CD14-positive monocyte (primary cell): ENCODE measurements at regions of chr20 and their contacts with region 1.

Region 1: DNA sequence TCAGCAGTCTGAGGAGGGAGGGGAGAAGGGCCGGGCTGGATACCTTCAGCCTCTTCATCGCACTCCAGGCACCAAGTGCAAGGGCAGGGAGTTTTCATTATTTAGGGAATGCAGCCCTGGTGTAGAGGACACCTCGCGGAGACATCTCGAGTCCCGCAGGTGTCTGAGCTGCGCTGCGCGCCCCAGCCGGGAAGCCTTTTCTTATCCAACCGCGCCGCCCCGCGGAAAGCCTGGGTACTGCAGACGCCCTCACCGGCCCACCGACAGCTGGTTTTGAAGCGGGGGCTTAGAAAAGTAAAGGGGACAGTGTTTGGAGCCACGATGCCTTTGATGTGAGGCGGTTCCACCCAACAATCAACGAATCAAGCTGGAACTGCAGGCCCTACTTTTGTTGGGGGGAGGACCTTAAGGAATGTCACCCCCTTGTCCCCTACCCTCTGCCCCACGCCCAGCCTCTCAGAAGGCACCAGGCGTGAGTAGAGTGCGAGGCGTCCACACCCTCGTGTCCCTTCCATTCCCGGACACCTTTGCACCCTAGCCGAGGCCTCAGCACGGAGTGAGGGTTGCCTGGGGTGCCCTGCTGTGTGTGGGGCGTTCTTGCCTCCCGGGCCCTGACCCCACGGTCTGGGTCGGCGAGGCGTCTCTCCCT is 8.6 kb downstream of the NKX2-2 start:
- DNase-seq: peak; percentile 18 to 35 (median 35)
- H3K4me3 ChIP-seq: peak overlapping the region in 1 of 3 experiments; percentile 66
- H3K4me3 Mint-ChIP-seq: peak overlapping the region in 1 of 2 donors; percentile 71
- H3K27ac ChIP-seq: no peak overlapping the region
- H3K27ac Mint-ChIP-seq: no peak overlapping the region
- H3K4me1 ChIP-seq: peaks cover 19 to 21% of the 10 kb centered on the region in 2 donors
- H3K4me1 Mint-ChIP-seq: peaks cover 28% of the 10 kb centered on the region
- H3K27me3 ChIP-seq: peaks cover 46 to 65% of the 10 kb centered on the region in 2 donors
- H3K27me3 Mint-ChIP-seq: peaks cover 63 to 84% (median 74%) of the 10 kb centered on the region in 3 donors
- CTCF ChIP-seq: peak; percentile 98

Region 2: DNA sequence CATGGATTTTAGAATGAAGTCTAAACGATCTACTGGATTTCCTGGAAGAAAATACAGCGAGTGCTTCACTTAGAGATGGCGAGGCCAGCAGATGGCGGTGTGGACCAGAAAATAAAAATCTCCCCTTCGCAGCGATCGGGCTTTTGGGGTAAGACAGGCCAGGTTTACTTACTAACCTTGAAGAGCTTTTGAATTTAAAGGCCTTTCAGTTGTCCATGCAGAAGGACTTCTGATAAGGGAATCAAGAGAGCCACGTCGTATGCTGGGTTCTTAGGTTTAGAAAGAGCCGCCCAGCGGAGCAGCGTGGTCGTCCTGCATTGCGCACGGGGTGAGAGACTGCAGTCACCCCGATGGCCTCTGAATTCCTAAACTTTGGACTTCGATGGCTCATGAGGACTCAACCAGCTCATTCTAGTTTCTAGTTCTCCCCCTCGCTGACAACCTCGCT is 667.7 kb before region 1 on chr20:
- intact Hi-C with region 1: loop called in 1 of 2 experiments (anchors 5 kb)
- DNase-seq: peak in 2 of 3 donors; percentile 19 to 25
- H3K4me3 ChIP-seq: no peak overlapping the region
- H3K4me3 Mint-ChIP-seq: peak overlapping the region; percentile 60 to 77
- H3K27ac ChIP-seq: no peak overlapping the region
- H3K27ac Mint-ChIP-seq: no peak overlapping the region
- H3K4me1 ChIP-seq: peaks cover 0 to 5% of the 10 kb centered on the region in 2 donors
- H3K4me1 Mint-ChIP-seq: peaks cover 8% of the 10 kb centered on the region
- H3K27me3 ChIP-seq: peaks cover 0 to 9% of the 10 kb centered on the region in 2 donors
- H3K27me3 Mint-ChIP-seq: peaks cover 15 to 32% (median 25%) of the 10 kb centered on the region in 3 donors
- CTCF ChIP-seq: peak; percentile 77

Region 3: GRCh38 chr20:20860078-20860806 is 645.0 kb before region 1 on chr20:
- intact Hi-C with region 1: loop called in 1 of 2 experiments (anchors 5 kb)
- DNase-seq: peak; percentile 66 to 80 (median 78)
- H3K4me3 ChIP-seq: no peak overlapping the region
- H3K4me3 Mint-ChIP-seq: peak overlapping the region in 1 of 2 donors; percentile 4
- H3K27ac ChIP-seq: no peak overlapping the region
- H3K27ac Mint-ChIP-seq: no peak overlapping the region
- H3K4me1 ChIP-seq: peaks cover 8 to 9% of the 10 kb centered on the region in 2 donors
- H3K4me1 Mint-ChIP-seq: peaks cover 7% of the 10 kb centered on the region
- H3K27me3 ChIP-seq: peaks cover 0 to 3% of the 10 kb centered on the region in 2 donors
- H3K27me3 Mint-ChIP-seq: peaks cover 11 to 16% (median 13%) of the 10 kb centered on the region in 3 donors
- CTCF ChIP-seq: peak; percentile 96

Region 4: DNA sequence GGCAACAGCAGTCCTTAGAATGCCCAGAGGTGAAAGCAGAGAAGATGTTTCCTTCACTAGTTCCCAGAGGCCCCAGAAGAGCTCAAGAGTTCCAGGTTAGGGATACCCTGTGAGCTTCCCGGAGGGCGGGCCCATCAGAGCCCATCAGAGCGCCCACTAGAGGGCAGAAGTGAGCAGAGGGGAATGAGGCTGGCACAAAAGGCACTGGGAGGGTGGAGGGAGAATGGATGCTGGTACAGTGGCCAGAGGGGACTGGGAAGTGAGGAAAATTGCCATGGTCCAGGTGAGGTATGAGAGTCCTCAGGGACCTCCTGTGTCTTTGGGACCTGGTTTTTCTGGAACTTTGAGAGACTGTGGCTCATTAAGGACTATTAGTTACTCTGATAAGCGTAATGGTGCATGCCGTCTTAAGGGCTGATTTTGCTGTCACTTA is 456.4 kb before region 1 on chr20:
- intact Hi-C with region 1: loop called in 1 of 2 experiments (anchors 2 kb)
- DNase-seq: peak; percentile 3 to 42 (median 36)
- H3K4me3 ChIP-seq: no peak overlapping the region
- H3K4me3 Mint-ChIP-seq: no peak overlapping the region
- H3K27ac ChIP-seq: no peak overlapping the region
- H3K27ac Mint-ChIP-seq: no peak overlapping the region
- H3K4me1 ChIP-seq: no peaks in the 10 kb centered on the region
- H3K4me1 Mint-ChIP-seq: peaks cover 7% of the 10 kb centered on the region
- H3K27me3 ChIP-seq: peaks cover 0 to 12% of the 10 kb centered on the region in 2 donors
- H3K27me3 Mint-ChIP-seq: peaks cover 11 to 29% (median 24%) of the 10 kb centered on the region in 3 donors
- CTCF ChIP-seq: peak; percentile 91

Region 5: DNA sequence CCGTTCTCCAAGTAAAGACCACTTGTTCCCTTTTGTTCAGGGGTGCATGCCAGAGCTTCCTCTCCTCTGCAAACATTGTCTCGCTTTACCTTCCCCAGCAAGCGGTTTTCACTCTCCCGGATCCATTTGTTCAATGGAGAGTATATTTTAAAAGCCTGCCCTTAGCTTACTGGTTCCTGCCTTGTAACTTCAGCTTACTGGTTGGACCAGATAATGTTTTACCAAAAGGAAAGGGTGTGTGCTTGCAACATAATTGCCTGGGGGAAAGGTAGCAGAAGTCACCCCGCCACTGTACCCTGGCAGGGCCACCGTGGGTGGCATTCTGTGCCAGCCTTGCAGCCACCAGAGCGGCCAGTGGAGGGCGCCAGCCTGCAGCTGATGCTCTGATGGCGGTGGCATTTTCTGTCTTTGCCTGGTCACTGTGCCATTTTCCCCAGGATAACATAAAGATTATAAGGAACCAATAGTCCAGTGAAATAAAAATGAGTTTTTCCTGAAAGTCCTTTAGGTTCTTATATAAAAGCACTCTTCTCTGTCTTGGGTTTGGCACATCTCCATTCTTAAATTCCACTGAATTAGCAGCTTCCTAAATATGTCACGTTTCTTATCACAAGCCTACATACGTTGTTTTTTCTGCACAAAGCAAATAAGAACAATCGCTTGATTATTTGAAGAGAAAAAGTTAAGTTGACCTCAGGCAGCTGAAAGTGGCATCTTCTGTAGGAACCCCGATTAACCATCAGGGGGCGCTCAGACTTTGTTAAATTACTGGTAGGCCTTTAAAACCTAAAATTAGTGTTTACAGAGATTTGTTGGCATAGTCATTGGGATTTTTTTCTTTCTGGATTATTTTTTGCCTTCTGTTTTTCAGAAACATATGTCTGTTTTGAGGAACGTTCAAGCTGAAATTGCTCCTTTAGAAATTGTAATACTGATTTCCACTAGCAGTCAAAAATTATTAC is 269.5 kb before region 1 on chr20:
- intact Hi-C with region 1: loop called (anchors 1 to 2 kb)
- DNase-seq: peak; percentile 40 to 66 (median 52)
- H3K4me3 ChIP-seq: no peak overlapping the region
- H3K4me3 Mint-ChIP-seq: no peak overlapping the region
- H3K27ac ChIP-seq: no peak overlapping the region
- H3K27ac Mint-ChIP-seq: no peak overlapping the region
- H3K4me1 ChIP-seq: peaks cover 0 to 4% of the 10 kb centered on the region in 2 donors
- H3K4me1 Mint-ChIP-seq: peaks cover 6% of the 10 kb centered on the region
- H3K27me3 ChIP-seq: no peaks in the 10 kb centered on the region
- H3K27me3 Mint-ChIP-seq: peaks cover 0 to 9% (median 4%) of the 10 kb centered on the region in 3 donors
- CTCF ChIP-seq: peak; percentile 99

Region 6: GRCh38 chr20:21395666-21396598 is 109.4 kb before region 1 on chr20:
- intact Hi-C with region 1: loop called in 1 of 2 experiments (anchors 10 kb)
- DNase-seq: peak in 1 of 3 donors; percentile 10
- H3K4me3 ChIP-seq: no peak overlapping the region
- H3K4me3 Mint-ChIP-seq: peak overlapping the region; percentile 64 to 81
- H3K27ac ChIP-seq: no peak overlapping the region
- H3K27ac Mint-ChIP-seq: no peak overlapping the region
- H3K4me1 ChIP-seq: peaks cover 0 to 13% of the 10 kb centered on the region in 2 donors
- H3K4me1 Mint-ChIP-seq: peaks cover 30% of the 10 kb centered on the region
- H3K27me3 ChIP-seq: peaks cover 84 to 87% of the 10 kb centered on the region in 2 donors
- H3K27me3 Mint-ChIP-seq: peaks cover 79 to 92% (median 82%) of the 10 kb centered on the region in 3 donors
- CTCF ChIP-seq: no peak

Region 7: GRCh38 chr20:21436205-21436604 is 69.1 kb before region 1 on chr20:
- intact Hi-C with region 1: no loop called
- DNase-seq: no peak
- H3K4me3 ChIP-seq: no peak overlapping the region
- H3K4me3 Mint-ChIP-seq: peak overlapping the region in 1 of 2 donors; percentile 16
- H3K27ac ChIP-seq: no peak overlapping the region
- H3K27ac Mint-ChIP-seq: no peak overlapping the region
- H3K4me1 ChIP-seq: no peaks in the 10 kb centered on the region
- H3K4me1 Mint-ChIP-seq: no peaks in the 10 kb centered on the region
- H3K27me3 ChIP-seq: peaks cover 2 to 9% of the 10 kb centered on the region in 2 donors
- H3K27me3 Mint-ChIP-seq: peaks cover 13 to 23% (median 19%) of the 10 kb centered on the region in 3 donors
- CTCF ChIP-seq: no peak